Dorsolateral prefrontal cortex (tissue), 120 donors: ENCODE measurements at regions of chr12 and their contacts with region 1.

Region 1: GRCh38 chr12:123601602-123602489 is at the start of gene DDX55:
- DNase-seq: peak; percentile 59 to 89 (median 84)
- H3K4me3 ChIP-seq: peak within 1 kb of the TSS; percentile 75 to 100 (median 98)
- H3K27ac ChIP-seq: peak within 1 kb of the TSS; percentile 26 to 96 (median 88)
- H3K27me3 ChIP-seq: no peaks in the 10 kb centered on the region
- CTCF ChIP-seq: peak; percentile 19 to 88 (median 68)
- total RNA-seq, gene DDX55: 14.3 to 32.8 (median 20.8) TPM

Region 2: DNA sequence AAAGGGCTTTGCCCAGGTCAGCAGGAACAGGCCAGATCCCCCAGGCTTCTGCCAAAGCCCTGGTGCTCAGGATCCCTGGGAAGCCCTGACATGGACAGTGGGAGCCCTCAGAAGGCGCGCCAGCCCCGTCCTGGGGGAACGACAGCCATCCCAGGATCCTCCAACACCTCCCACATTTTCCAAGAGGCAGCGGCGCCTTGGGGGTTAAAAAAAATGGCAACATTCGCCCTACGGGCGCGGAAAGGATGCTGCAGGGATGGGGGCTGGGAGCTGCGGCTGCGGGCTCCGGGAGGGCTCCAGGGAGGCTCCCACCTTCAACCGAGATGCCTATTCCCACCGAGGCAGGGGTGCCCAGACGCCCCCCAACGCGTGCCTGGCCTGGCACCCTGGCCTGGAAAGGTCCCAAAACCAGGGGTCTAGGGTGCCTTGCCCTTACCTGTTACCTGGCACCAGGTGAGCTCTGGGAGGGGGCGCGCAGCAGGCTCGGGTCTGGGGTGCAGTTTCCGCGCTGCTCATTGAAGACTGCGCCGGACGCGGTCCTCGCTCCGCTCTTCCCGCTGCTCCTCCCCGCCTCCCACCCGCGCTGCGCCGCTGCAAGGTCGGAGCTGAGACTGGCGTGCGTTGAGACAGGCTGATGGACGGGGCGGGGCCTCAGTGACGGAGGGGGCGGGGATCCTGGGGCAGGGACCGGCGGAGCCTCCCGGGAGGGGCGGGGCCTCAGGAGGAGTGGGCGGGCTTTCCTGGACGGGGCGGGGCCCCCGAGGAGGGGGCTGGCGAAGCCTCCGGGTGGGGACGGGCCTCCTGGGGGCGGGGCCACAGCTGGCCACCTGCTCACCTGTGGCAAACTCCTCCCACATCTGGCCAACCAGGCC is 635.8 kb before region 1 on chr12 and contains the start of gene ABCB9:
- intact Hi-C with region 1: loop called in 1 of 2 experiments (anchors 10 kb)
- DNase-seq: peak; percentile 80 to 96 (median 92)
- H3K4me3 ChIP-seq: peak within 1 kb of the TSS; percentile 62 to 98 (median 86)
- H3K27ac ChIP-seq: peak within 1 kb of the TSS; percentile 7 to 95 (median 83)
- H3K27me3 ChIP-seq: no peaks in the 10 kb centered on the region
- CTCF ChIP-seq: peak in 3 of 56 donors; percentile 8 to 18 (median 15)
- total RNA-seq, gene ABCB9: 26.8 to 86.6 (median 52.6) TPM

Region 3: GRCh38 chr12:122974274-122974891 is 627.5 kb before region 1 on chr12:
- intact Hi-C with region 1: loop called (anchors 5 to 10 kb)
- DNase-seq: peak; percentile 97 to 99 (median 98)
- H3K4me3 ChIP-seq: peak overlapping the region; percentile 71 to 100 (median 94)
- H3K27ac ChIP-seq: peak overlapping the region; percentile 94 to 100 (median 99)
- H3K27me3 ChIP-seq: no peaks in the 10 kb centered on the region
- CTCF ChIP-seq: peak in 5 of 56 donors; percentile 7 to 21 (median 15)

Region 4: GRCh38 chr12:123271001-123271729 is 330.7 kb before region 1 on chr12:
- intact Hi-C with region 1: loop called in 1 of 2 experiments (anchors 5 kb)
- DNase-seq: peak in 9 of 10 donors; percentile 56 to 83 (median 68)
- H3K4me3 ChIP-seq: peak overlapping the region; percentile 50 to 87 (median 73)
- H3K27ac ChIP-seq: peak overlapping the region in 56 of 59 donors; percentile 88 to 99 (median 98)
- H3K27me3 ChIP-seq: no peaks in the 10 kb centered on the region
- CTCF ChIP-seq: peak in 39 of 56 donors; percentile 5 to 74 (median 47)

Region 5: GRCh38 chr12:123633379-123634141 is 31.7 kb after region 1 on chr12 and contains the starts of genes EIF2B1 and GTF2H3:
- intact Hi-C with region 1: loop called in 1 of 2 experiments (anchors 2 kb)
- DNase-seq: peak; percentile 95 to 99 (median 97)
- H3K4me3 ChIP-seq: peak within 1 kb of the TSS; percentile 57 to 100 (median 93)
- H3K27ac ChIP-seq: peak within 1 kb of the TSS; percentile 26 to 93 (median 77)
- H3K27me3 ChIP-seq: no peaks in the 10 kb centered on the region
- CTCF ChIP-seq: peak in 33 of 56 donors; percentile 6 to 55 (median 30)
- total RNA-seq, gene EIF2B1: 31.4 to 56.3 (median 43.6) TPM
- total RNA-seq, gene GTF2H3: 18.5 to 41.9 (median 28.2) TPM

Region 6: DNA sequence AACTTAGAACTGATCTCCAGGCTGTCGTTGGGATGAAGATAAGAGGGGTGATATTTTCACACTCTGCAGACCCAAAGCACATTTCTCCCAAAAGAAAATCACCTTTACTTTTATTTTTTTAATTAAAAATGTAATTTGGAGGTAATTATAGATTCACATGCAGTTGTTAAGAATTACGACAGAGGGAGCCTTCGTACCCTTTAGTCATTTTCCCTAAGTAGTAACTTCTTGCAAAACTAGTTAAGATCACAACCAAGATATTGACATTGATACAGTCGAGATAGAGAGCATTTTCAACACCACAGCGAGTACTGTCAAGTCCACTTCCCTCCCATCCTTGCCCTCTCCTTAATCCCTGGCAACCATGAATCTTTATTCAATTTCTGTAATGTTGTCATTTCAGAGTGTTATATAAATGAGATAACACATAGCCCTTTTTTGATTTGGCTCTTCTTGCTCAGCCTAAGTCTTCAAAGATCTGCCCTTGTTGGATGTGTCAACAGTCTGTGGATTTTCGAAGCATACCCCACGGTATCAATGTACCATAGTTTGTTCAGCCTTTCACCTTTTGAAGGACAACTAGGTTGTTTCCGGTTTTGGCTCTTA is 199.8 kb after region 1 on chr12:
- intact Hi-C with region 1: no loop called
- DNase-seq: no peak
- H3K4me3 ChIP-seq: no peak overlapping the region
- H3K27ac ChIP-seq: no peak overlapping the region
- H3K27me3 ChIP-seq: no peaks in the 10 kb centered on the region
- CTCF ChIP-seq: peak in 53 of 56 donors; percentile 8 to 64 (median 47)